Activated CD4-positive, alpha-beta T cell treated with anti-CD3 and anti-CD28 coated beads for 36 hours (primary cell): ENCODE measurements at regions of chr20 and their contacts with region 1.

Region 1: DNA sequence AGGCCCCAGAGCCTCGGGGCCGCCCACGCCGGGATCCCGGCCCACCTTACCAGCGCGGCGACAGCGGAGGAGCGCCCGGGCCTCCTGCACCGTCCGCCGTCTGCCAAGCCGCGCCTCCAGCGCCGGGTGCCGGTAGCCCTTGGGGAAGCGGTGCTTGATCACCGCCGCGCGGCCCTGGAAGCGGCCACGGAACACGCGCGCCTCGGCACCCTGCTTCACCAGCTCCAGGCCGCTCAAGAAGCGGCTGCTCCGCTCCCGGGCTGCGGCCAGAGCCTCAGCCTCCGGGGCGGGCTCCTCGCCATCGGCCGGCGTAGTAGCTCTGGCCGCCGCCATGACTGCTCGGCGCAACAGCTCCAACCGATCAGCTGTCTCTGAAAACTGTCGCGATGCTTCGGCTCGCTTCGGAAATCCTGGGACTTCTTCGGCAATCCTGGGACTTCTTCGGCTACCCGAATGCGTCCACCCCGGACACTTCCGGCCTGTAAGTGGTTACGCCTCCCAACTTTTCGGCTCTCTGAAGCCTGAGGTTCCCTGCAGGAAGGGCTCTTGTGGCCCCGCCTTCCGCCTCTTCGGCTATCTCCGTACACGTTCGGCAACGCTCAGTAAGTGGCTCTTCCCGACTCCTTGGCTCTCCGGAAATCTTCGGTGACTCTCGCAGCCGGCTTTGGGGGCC is at the start of gene TP53RK:
- DNase-seq: peak; percentile 98
- ATAC-seq: peak; percentile 98
- H3K4me3 Mint-ChIP-seq: peak within 1 kb of the TSS; percentile 91
- H3K27ac Mint-ChIP-seq: peak within 1 kb of the TSS; percentile 95
- H3K4me1 Mint-ChIP-seq: peaks cover 39% of the 10 kb centered on the region
- H3K27me3 Mint-ChIP-seq: no peaks in the 10 kb centered on the region
- total RNA-seq, gene TP53RK: 11.2 to 12.1 TPM

Region 2: GRCh38 chr20:44885392-44886265 is 1803.6 kb before region 1 on chr20 and contains the start of gene YWHAB:
- CTCF ChIA-PET with region 1: no interaction called
- POLR2A ChIA-PET with region 1: no interaction called
- intact Hi-C with region 1: loop called in 1 of 2 experiments (anchors 5 kb)
- DNase-seq: peak; percentile 99
- ATAC-seq: peak; percentile 96
- H3K4me3 Mint-ChIP-seq: peak within 1 kb of the TSS; percentile 94
- H3K27ac Mint-ChIP-seq: peak within 1 kb of the TSS; percentile 95
- H3K4me1 Mint-ChIP-seq: peaks cover 58% of the 10 kb centered on the region
- H3K27me3 Mint-ChIP-seq: no peaks in the 10 kb centered on the region
- total RNA-seq, gene YWHAB: 273 to 326 TPM

Region 3: DNA sequence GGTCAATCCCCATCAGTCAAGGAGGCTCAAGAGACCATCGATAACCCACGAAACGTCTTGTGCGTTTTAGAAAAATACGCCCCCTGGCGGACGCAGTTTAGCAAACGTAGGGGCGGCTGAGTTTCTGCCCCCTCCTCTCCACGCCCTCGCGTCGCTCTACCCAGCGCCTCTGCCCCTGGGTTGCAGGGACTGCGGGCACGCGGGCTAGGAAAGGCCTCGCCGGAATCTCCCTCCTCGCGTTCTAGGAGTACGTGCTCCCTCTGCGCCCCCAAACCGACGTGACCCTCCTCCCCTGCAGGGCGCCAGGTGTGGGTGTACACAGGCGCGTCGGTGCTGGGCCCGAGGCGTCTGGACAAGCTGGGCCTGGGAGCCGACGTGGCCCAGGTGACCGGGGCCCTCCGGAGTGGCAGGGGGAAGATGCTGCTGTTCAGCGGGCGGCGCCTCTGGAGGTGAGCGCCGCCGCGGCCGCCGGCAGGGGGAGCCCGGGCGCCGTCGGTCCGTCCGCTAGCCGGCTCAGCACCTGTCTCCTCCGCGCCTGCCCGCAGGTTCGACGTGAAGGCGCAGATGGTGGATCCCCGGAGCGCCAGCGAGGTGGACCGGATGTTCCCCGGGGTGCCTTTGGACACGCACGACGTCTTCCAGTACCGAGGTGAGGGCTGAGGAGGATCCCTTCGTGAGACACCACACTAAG is 675.2 kb before region 1 on chr20:
- CTCF ChIA-PET with region 1: interaction called, 3 read pairs
- POLR2A ChIA-PET with region 1: no interaction called
- intact Hi-C with region 1: loop called in 1 of 2 experiments (anchors 5 kb)
- DNase-seq: peak; percentile 85
- ATAC-seq: peak; percentile 88
- H3K4me3 Mint-ChIP-seq: peak overlapping the region; percentile 39
- H3K27ac Mint-ChIP-seq: no peak overlapping the region
- H3K4me1 Mint-ChIP-seq: peaks cover 51% of the 10 kb centered on the region
- H3K27me3 Mint-ChIP-seq: peaks cover 58% of the 10 kb centered on the region

Region 4: DNA sequence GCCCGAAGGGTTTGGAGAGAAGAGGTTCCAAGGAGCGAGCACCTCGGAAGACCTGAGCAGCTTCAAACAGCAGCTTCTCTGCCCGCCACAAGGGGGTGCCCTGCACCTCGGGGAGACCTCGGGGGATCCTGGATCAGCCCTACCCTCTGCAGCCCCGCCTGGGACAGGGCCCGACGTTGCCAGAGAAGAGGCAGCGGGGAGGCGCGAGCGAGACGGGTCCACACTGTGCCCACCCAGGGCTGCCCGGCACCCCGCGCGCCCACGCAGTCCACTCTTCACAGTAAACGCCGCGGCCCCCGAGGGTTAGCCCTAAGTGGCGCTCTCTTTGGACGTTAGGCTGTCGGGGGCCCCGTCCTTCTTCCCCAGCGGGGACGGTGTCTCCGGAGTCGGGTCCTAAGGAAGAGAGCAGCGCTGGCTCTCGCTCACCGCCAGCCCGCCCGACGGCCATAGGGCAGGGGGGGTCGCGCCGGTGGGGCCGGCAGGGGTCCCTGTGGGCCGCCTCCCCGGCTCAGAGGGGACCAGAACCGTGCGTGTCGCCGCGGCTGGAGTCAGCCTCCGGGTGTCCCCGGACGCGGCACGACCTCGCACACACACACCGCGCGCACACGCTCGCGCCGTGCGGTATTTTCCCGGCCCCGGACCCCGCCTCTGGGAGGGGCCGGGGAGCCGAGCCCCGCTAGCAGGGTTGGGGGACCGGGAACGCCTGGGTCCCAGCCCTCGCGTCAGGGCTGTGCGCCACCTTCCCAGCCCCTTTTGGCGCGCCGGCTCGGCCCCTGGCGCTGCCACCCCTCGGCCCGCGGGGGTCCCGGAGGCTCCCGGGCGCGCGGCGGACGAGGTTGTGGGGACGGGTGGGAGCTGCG is 381.8 kb before region 1 on chr20:
- CTCF ChIA-PET with region 1: interaction called, 4 read pairs
- POLR2A ChIA-PET with region 1: no interaction called
- intact Hi-C with region 1: loop called in 1 of 2 experiments (anchors 5 kb)
- DNase-seq: peak; percentile 87
- ATAC-seq: peak; percentile 90
- H3K4me3 Mint-ChIP-seq: no peak overlapping the region
- H3K27ac Mint-ChIP-seq: no peak overlapping the region
- H3K4me1 Mint-ChIP-seq: peaks cover 8% of the 10 kb centered on the region
- H3K27me3 Mint-ChIP-seq: peaks cover 61% of the 10 kb centered on the region

Region 5: DNA sequence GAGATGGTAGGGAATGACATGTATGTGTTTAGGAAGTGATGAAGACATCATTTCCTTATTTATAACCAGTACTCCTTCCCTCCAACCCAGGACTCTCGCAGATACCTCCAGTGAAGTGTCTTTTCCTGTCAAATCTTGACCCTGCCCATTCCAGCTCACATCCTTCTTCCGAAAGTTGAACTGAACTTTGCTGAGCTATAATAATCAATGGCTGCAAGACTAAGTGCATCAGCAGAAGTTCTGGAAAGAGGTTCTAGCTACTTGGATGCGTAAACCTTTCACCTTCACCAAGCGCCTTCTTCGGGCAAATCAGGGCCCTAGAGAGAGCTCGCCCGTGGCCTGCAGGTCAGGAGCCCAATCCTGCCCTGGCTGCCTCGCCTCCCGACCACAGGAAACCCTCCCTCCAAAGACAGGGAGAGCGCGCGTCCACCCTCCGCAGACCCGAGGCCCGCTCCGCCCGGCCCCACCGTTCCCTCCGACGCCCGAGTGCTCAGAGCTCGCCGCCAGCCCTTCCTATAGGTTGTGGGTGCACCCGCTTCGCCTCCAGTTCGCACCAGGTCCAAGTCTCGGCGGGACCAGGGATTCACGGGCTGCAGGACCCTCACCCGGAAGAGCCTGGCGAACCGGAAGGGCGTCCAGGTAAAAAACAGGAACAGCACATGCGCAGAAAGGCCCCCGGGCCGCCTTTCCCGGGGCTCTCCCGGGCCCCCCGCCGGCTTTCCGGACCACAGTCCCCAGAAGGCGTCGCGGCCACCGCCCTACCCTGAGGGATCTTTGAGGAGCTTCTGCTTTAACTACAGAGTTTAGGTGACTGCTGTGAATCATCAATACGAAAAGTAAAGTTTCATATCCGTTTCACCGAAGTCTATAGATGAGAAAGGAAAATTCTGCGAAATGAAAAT is 176.0 kb before region 1 on chr20 and contains the start of gene ZNF334:
- CTCF ChIA-PET with region 1: interaction called, 3 read pairs
- POLR2A ChIA-PET with region 1: interaction called, 3 read pairs
- intact Hi-C with region 1: loop called in 1 of 2 experiments (anchors 2 kb)
- DNase-seq: peak; percentile 83
- ATAC-seq: peak; percentile 99
- H3K4me3 Mint-ChIP-seq: peak within 1 kb of the TSS; percentile 77
- H3K27ac Mint-ChIP-seq: peak within 1 kb of the TSS; percentile 76
- H3K4me1 Mint-ChIP-seq: peaks cover 24% of the 10 kb centered on the region
- H3K27me3 Mint-ChIP-seq: peaks cover 29% of the 10 kb centered on the region
- total RNA-seq, gene ZNF334: 3.4 to 4.9 TPM

Region 6: GRCh38 chr20:46562373-46563169 is 126.6 kb before region 1 on chr20:
- CTCF ChIA-PET with region 1: interaction called, 3 read pairs
- POLR2A ChIA-PET with region 1: interaction called, 3 read pairs
- intact Hi-C with region 1: loop called in 1 of 2 experiments (anchors 1 kb)
- DNase-seq: peak; percentile 82
- ATAC-seq: peak; percentile 66
- H3K4me3 Mint-ChIP-seq: no peak overlapping the region
- H3K27ac Mint-ChIP-seq: no peak overlapping the region
- H3K4me1 Mint-ChIP-seq: peaks cover 18% of the 10 kb centered on the region
- H3K27me3 Mint-ChIP-seq: peaks cover 13% of the 10 kb centered on the region